ENCODE measurements at regions of chr16 and their contacts with region 1.

Region 1: GRCh38 chr16:89602273-89602951 is 11.0 kb upstream of the DPEP1 start:
- DNase-seq: peak; percentile 75
- H3K4me3 ChIP-seq: no peak overlapping the region
- H3K27ac ChIP-seq: no peak overlapping the region
- H3K4me1 ChIP-seq: peaks cover 11% of the 10 kb centered on the region
- H3K27me3 ChIP-seq: no peaks in the 10 kb centered on the region
- CTCF ChIP-seq: no peak
- POLR2A ChIP-seq: no peak

Region 2: DNA sequence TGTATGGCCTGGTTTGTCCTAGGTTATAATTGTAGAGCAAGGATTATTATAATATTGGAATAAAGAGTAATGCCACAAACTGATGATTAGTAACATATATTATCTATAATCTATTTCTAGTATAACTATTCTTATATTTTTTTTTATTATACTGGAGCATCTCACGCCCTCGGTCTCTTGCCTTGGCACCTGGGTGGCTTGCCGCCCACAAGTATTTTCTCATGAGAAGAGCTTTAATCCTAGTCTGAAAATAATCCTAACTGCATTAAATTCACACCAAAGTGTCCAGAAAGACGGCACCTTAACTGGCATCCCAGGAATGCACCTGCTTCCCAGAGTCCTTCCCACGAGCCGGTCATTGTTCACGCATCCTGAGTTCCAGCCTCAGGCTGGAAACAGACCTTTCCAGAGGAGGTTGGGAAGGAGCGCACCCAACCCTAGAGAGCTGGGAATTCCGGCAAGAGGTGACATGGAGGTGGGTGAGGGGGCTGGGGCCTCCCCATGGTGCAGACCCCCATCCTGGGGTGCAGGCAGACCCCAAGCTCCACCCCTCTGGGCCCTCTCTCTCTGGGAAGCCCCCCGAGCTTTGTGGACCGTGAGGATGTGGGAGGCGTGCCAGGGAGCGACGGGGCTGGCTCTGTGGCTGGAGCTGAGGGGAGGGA is 39.2 kb after region 1 on chr16:
- CTCF ChIA-PET with region 1: interaction called, 4 read pairs
- POLR2A ChIA-PET with region 1: no interaction called
- dilution Hi-C with region 1: no loop called
- intact Hi-C with region 1: loop called (anchors 1 kb)
- DNase-seq: no peak
- H3K4me3 ChIP-seq: no peak overlapping the region
- H3K27ac ChIP-seq: no peak overlapping the region
- H3K4me1 ChIP-seq: no peaks in the 10 kb centered on the region
- H3K27me3 ChIP-seq: no peaks in the 10 kb centered on the region
- CTCF ChIP-seq: no peak
- POLR2A ChIP-seq: no peak

Region 3: DNA sequence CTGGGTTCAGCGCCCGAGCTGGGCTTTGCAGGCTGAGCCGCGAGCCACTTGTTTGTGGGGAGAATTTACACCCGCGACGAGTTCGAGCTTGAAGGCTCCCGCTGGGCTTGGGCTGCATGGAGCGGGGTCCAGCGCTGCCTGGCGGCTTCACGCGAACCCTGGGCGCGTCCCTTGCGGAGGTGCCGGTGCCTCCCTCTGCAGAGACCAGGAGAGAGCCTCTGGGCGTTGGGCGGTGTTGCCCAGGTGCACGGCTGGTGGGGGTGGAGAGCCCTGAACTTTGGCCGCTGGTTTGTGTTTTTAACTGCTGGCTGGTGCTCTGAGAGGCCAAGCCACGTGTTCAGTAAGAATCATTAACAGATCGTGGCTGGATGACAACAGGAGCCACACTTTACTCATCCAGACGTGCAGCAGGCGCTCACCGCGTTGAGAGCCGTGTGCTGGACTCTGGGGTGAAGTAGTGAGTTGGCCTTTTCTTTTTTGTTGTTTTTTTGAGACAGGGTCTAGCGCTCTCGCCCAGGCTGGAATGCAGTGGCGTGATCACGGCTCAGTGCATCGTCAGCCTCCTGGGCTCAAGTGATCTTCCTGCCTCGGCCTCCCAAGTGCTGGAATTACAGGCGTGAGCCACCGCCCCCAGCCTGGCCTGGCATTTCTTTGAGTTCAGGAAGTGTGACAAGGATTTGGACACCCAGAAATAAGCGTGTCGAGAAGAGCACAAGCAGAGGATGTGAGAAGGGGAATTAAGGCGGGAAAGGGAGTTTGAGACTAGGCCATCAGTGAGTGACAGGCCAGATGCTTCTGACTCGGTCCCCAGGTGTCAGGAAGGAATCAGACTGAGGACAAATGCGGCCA is 84.9 kb after region 1 on chr16:
- CTCF ChIA-PET with region 1: no interaction called
- POLR2A ChIA-PET with region 1: no interaction called
- dilution Hi-C with region 1: no loop called
- intact Hi-C with region 1: no loop called
- DNase-seq: peak; percentile 51
- H3K4me3 ChIP-seq: peak overlapping the region; percentile 27 to 85 (median 35)
- H3K27ac ChIP-seq: peak overlapping the region; percentile 0
- H3K4me1 ChIP-seq: peaks cover 4% of the 10 kb centered on the region
- H3K27me3 ChIP-seq: no peaks in the 10 kb centered on the region
- CTCF ChIP-seq: peak in 1 of 2 donors; percentile 9
- POLR2A ChIP-seq: no peak

Region 4: DNA sequence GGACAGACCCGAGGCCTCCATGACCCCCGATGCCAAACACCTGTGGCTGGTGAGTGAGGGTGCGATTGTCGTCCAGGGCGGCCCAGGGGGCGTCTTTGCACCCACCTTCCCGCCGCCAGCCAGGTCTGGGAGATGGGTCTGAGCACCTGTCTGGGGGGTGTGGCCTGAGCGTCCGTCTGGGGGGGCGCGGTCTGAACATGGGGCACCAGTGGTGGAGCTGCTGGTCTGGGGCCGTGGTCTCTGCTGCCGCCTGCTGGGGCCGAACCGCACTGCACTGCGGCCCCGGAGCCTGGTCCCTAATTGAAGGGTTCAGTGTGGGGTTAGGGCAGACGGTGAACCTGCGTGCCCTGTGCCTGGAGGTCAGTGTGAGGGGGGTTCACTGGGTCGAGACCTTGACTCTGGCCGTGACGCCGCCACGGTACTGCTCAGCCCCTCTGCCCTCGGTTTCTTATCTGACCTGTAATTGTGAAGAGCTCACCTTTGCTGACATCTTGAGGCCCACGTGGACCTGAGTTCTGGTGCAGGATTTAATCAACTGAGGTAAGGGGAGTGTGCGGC is 258.4 kb after region 1 on chr16:
- CTCF ChIA-PET with region 1: no interaction called
- POLR2A ChIA-PET with region 1: no interaction called
- dilution Hi-C with region 1: no loop called
- intact Hi-C with region 1: no loop called
- DNase-seq: peak; percentile 57
- H3K4me3 ChIP-seq: no peak overlapping the region
- H3K27ac ChIP-seq: no peak overlapping the region
- H3K4me1 ChIP-seq: peaks cover 16% of the 10 kb centered on the region
- H3K27me3 ChIP-seq: no peaks in the 10 kb centered on the region
- CTCF ChIP-seq: peak; percentile 94 to 99
- POLR2A ChIP-seq: no peak

Measured in endothelial cell of umbilical vein (primary cell).